Naive thymus-derived CD4-positive, alpha-beta T cell (primary cell): ENCODE measurements at regions of chr18 and their contacts with region 1.

Region 1: DNA sequence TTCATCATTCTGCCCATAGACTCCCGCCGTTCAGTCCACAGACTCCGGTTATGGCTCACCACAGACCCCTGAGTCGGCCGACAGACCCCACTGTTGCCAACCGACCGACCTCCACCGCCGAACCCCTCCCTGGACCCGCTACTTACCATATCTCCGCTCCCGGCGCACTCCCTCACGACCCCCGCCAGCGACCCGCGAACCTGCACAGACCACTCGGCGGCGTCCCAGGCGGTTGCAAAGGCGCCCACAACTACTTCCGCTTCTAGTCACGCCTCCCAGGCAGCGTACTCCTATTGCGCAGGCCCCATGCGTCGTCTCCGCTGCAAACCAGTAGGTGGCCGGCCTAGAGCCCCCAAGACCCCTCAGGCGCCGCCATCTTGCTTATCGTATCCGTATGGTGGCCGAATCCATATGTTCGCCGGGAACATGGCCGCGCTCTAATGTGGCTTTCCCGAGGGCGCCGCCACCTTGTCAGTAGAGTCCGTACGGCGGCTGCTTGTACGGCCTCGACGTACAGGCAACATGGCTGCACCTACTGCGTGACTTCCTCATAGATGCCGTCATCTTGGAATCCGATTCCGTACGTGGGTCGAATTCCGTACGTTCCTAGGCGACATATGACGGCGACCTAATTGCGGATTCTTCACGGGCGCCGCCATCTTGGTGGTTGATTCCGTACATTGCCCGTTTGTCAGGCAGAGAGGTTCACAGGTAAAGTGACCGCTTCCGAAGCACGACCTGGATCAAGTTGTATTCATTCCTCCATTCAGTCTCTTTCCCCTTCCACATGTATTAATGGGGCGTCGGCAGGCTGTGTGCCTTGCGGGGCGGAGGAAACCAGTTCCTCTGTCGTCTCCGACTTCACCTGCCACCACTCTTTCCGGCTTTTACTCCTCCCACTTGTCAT is at the start of gene CXXC1:
- DNase-seq: peak; percentile 89 to 98 (median 97)
- ATAC-seq: peak; percentile 92
- H3K4me3 ChIP-seq: peak within 1 kb of the TSS; percentile 98
- H3K4me3 Mint-ChIP-seq: peak within 1 kb of the TSS; percentile 91 to 100 (median 98)
- H3K27ac ChIP-seq: peak within 1 kb of the TSS; percentile 97
- H3K27ac Mint-ChIP-seq: peak within 1 kb of the TSS; percentile 94 to 100 (median 99)
- H3K4me1 ChIP-seq: peaks cover 0 to 7% of the 10 kb centered on the region in 2 donors
- H3K4me1 Mint-ChIP-seq: peaks cover 6 to 39% (median 28%) of the 10 kb centered on the region in 7 donors
- H3K27me3 ChIP-seq: no peaks in the 10 kb centered on the region
- H3K27me3 Mint-ChIP-seq: peaks cover 0 to 2% (median 0%) of the 10 kb centered on the region in 5 donors
- total RNA-seq, gene CXXC1: 141 to 197 (median 155) TPM

Region 2: GRCh38 chr18:49486953-49487710 is 800.6 kb before region 1 on chr18 and contains the start of gene C18orf32:
- CTCF ChIA-PET with region 1: no interaction called
- POLR2A ChIA-PET with region 1: no interaction called
- intact Hi-C with region 1: loop called (anchors 1 kb)
- DNase-seq: peak; percentile 84 to 93 (median 92)
- ATAC-seq: peak; percentile 94
- H3K4me3 ChIP-seq: peak within 1 kb of the TSS; percentile 95
- H3K4me3 Mint-ChIP-seq: peak within 1 kb of the TSS; percentile 77 to 98 (median 94)
- H3K27ac ChIP-seq: peak within 1 kb of the TSS; percentile 95
- H3K27ac Mint-ChIP-seq: peak within 1 kb of the TSS; percentile 90 to 98 (median 96)
- H3K4me1 ChIP-seq: peaks cover 34 to 39% of the 10 kb centered on the region in 2 donors
- H3K4me1 Mint-ChIP-seq: peaks cover 40 to 83% (median 70%) of the 10 kb centered on the region in 7 donors
- H3K27me3 ChIP-seq: no peaks in the 10 kb centered on the region
- H3K27me3 Mint-ChIP-seq: no peaks in the 10 kb centered on the region
- total RNA-seq, gene C18orf32: 22.5 to 53.6 (median 31.5) TPM

Region 3: GRCh38 chr18:50231621-50232020 is 56.1 kb before region 1 on chr18:
- CTCF ChIA-PET with region 1: no interaction called
- POLR2A ChIA-PET with region 1: no interaction called
- intact Hi-C with region 1: no loop called
- DNase-seq: no peak
- ATAC-seq: no peak
- H3K4me3 ChIP-seq: no peak overlapping the region
- H3K4me3 Mint-ChIP-seq: no peak overlapping the region
- H3K27ac ChIP-seq: no peak overlapping the region
- H3K27ac Mint-ChIP-seq: no peak overlapping the region
- H3K4me1 ChIP-seq: no peaks in the 10 kb centered on the region
- H3K4me1 Mint-ChIP-seq: peaks cover 0 to 3% (median 0%) of the 10 kb centered on the region in 7 donors
- H3K27me3 ChIP-seq: peaks cover 0 to 5% of the 10 kb centered on the region in 2 donors
- H3K27me3 Mint-ChIP-seq: peaks cover 2 to 18% (median 14%) of the 10 kb centered on the region in 5 donors

Region 4: DNA sequence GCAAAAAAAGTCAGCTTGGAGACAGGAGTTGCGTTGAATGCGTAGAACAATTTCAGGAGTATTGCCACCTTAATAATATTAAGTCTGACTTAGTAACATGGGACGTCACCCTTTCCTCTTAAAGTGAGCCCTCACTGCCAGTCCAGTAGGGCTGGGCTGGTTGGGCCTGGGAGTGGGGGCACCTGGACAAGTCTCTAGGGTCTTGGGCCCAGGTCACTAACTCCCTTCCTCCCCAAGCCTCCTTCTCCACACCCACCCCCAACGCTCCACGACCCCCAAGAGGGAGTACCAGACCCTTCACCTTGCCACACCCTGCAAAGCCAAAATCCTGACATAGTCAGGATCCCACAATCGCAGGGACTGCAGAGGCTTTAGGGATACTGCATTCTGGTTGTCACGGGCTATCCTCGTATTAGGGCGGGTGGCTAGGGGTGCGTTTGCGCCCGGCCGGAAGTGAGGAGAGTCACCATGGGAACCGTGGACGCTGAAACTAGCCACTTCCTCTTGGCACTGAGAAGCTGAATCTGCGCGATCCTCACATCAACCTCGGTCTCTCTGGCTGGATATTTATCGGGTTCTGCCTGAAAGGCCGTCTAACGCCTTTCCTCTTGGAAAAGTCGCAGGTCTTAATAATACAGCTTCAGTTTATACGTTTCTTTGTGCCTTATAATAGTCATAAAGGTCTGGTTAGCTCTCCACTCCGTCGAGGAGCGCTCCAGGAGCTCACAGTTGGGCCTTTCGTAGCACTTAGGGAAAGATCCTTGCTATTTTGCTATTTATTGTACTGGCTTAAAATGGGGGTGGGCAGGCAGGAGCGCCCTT is 10.1 kb after region 1 on chr18:
- CTCF ChIA-PET with region 1: no interaction called
- POLR2A ChIA-PET with region 1: interaction called, 17 read pairs
- intact Hi-C with region 1: loop called (anchors 1 kb)
- DNase-seq: peak in 8 of 9 donors; percentile 48 to 70 (median 68)
- ATAC-seq: peak; percentile 95
- H3K4me3 ChIP-seq: peak overlapping the region; percentile 57
- H3K4me3 Mint-ChIP-seq: peak overlapping the region; percentile 52 to 90 (median 84)
- H3K27ac ChIP-seq: no peak overlapping the region
- H3K27ac Mint-ChIP-seq: peak overlapping the region in 4 of 9 donors; percentile 43 to 76 (median 59)
- H3K4me1 ChIP-seq: peaks cover 0 to 11% of the 10 kb centered on the region in 2 donors
- H3K4me1 Mint-ChIP-seq: peaks cover 4 to 14% (median 7%) of the 10 kb centered on the region in 7 donors
- H3K27me3 ChIP-seq: no peaks in the 10 kb centered on the region
- H3K27me3 Mint-ChIP-seq: peaks cover 10 to 48% (median 19%) of the 10 kb centered on the region in 5 donors

Region 5: GRCh38 chr18:50356036-50356945 is 68.6 kb after region 1 on chr18:
- CTCF ChIA-PET with region 1: no interaction called
- POLR2A ChIA-PET with region 1: interaction called, 3 read pairs
- intact Hi-C with region 1: loop called (anchors 1 kb)
- DNase-seq: no peak
- ATAC-seq: peak; percentile 68
- H3K4me3 ChIP-seq: no peak overlapping the region
- H3K4me3 Mint-ChIP-seq: peak overlapping the region in 4 of 10 donors; percentile 12 to 55 (median 21)
- H3K27ac ChIP-seq: no peak overlapping the region
- H3K27ac Mint-ChIP-seq: peak overlapping the region in 5 of 9 donors; percentile 4 to 66 (median 49)
- H3K4me1 ChIP-seq: peaks cover 0 to 8% of the 10 kb centered on the region in 2 donors
- H3K4me1 Mint-ChIP-seq: peaks cover 0 to 11% (median 6%) of the 10 kb centered on the region in 7 donors
- H3K27me3 ChIP-seq: no peaks in the 10 kb centered on the region
- H3K27me3 Mint-ChIP-seq: peaks cover 11 to 44% (median 23%) of the 10 kb centered on the region in 5 donors

Region 6: GRCh38 chr18:50967714-50968661 is 680.3 kb after region 1 on chr18 and contains the start of gene ELAC1:
- CTCF ChIA-PET with region 1: no interaction called
- POLR2A ChIA-PET with region 1: no interaction called
- intact Hi-C with region 1: loop called in 1 of 2 experiments (anchors 10 kb)
- DNase-seq: peak; percentile 48 to 75 (median 65)
- ATAC-seq: peak; percentile 93
- H3K4me3 ChIP-seq: peak within 1 kb of the TSS; percentile 80
- H3K4me3 Mint-ChIP-seq: peak within 1 kb of the TSS; percentile 86 to 98 (median 94)
- H3K27ac ChIP-seq: peak within 1 kb of the TSS; percentile 90
- H3K27ac Mint-ChIP-seq: peak within 1 kb of the TSS; percentile 77 to 95 (median 92)
- H3K4me1 ChIP-seq: peaks cover 8 to 13% of the 10 kb centered on the region in 2 donors
- H3K4me1 Mint-ChIP-seq: peaks cover 15 to 35% (median 29%) of the 10 kb centered on the region in 7 donors
- H3K27me3 ChIP-seq: no peaks in the 10 kb centered on the region
- H3K27me3 Mint-ChIP-seq: no peaks in the 10 kb centered on the region
- total RNA-seq, gene ELAC1: 4.3 to 11.2 (median 6.3) TPM